Transverse colon (tissue), 4 donors: ENCODE measurements at regions of chr18 and their contacts with region 1.

Region 1: GRCh38 chr18:42813570-42813969 is 301.9 kb downstream of the RIT2 start:
- DNase-seq: no peak
- H3K4me3 ChIP-seq: no peak overlapping the region
- H3K27ac ChIP-seq: no peak overlapping the region
- H3K4me1 ChIP-seq: no peaks in the 10 kb centered on the region
- H3K27me3 ChIP-seq: no peaks in the 10 kb centered on the region
- CTCF ChIP-seq: no peak
- EP300 ChIP-seq: no peak
- POLR2A ChIP-seq: no peak

Region 2: DNA sequence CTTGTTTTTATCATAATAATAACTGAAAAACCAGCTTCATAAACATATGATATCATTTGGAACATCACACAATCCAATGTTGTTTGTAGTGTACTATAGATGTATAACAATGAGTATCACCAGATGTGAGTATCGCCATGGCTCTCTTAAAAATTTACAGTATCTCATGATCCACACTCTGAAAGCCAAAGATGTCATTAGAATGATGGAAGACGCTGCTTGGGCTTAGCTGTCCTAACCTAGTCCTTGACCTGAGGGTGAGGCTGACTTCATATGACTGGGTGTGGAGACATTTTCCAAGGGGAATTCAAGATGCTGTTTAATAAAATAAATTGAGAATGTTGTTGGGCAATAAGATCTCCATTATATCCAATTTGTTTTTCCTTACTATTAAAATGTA is 59.3 kb after region 1 on chr18:
- in situ Hi-C with region 1: loop called in 1 of 4 experiments (anchors 10 kb)
- intact Hi-C with region 1: no loop called
- DNase-seq: no peak
- H3K4me3 ChIP-seq: no peak overlapping the region
- H3K27ac ChIP-seq: no peak overlapping the region
- H3K4me1 ChIP-seq: no peaks in the 10 kb centered on the region
- H3K27me3 ChIP-seq: no peaks in the 10 kb centered on the region
- CTCF ChIP-seq: no peak
- EP300 ChIP-seq: no peak
- POLR2A ChIP-seq: no peak